Activated naive CD8-positive, alpha-beta T cell treated with anti-CD3 and anti-CD28 coated beads, Interleukin-2, amount 10 ng/mL, durations not matched to agents 7 days and 5 days (primary cell): ENCODE measurements at regions of chr5 and their contacts with region 1.

Region 1: GRCh38 chr5:134436523-134437339 is 25.1 kb upstream of the CDKN2AIPNL start:
- DNase-seq: peak; percentile 68
- ATAC-seq: peak; percentile 92
- H3K4me3 Mint-ChIP-seq: peak overlapping the region; percentile 60
- H3K27ac Mint-ChIP-seq: peak overlapping the region; percentile 81
- H3K4me1 Mint-ChIP-seq: peaks cover 22% of the 10 kb centered on the region
- H3K27me3 Mint-ChIP-seq: peaks cover 5% of the 10 kb centered on the region

Region 2: DNA sequence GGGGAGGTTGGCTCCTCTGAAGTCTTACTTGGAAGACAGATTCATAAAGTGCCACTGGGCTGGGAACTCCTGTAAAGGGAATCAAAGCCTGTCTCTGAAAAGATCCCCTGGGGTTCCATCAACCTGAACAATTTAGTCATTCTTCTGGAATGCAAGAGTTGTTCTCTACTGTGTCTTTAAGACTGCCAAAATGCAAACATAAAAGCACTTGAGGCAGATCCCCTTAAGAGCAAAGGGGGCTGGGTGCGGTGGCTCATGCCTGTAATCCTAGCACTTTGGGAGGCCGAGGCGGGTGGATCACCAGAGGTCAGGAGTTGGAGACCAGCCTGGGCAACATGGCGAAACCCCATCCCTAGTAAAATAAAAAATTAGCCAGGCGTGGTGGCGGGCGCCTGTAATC is 41.8 kb before region 1 on chr5:
- POLR2A ChIA-PET with region 1: no interaction called
- DNase-seq: no peak
- ATAC-seq: no peak
- H3K4me3 Mint-ChIP-seq: no peak overlapping the region
- H3K27ac Mint-ChIP-seq: no peak overlapping the region
- H3K4me1 Mint-ChIP-seq: no peaks in the 10 kb centered on the region
- H3K27me3 Mint-ChIP-seq: no peaks in the 10 kb centered on the region

Region 3: GRCh38 chr5:134420343-134420742 is 16.4 kb before region 1 on chr5:
- POLR2A ChIA-PET with region 1: no interaction called
- DNase-seq: no peak
- ATAC-seq: no peak
- H3K4me3 Mint-ChIP-seq: no peak overlapping the region
- H3K27ac Mint-ChIP-seq: no peak overlapping the region
- H3K4me1 Mint-ChIP-seq: no peaks in the 10 kb centered on the region
- H3K27me3 Mint-ChIP-seq: no peaks in the 10 kb centered on the region

Region 4: GRCh38 chr5:134465816-134466240 is 29.1 kb after region 1 on chr5:
- POLR2A ChIA-PET with region 1: interaction called, 11 read pairs
- DNase-seq: peak; percentile 80
- ATAC-seq: peak; percentile 77
- H3K4me3 Mint-ChIP-seq: peak overlapping the region; percentile 82
- H3K27ac Mint-ChIP-seq: peak overlapping the region; percentile 83
- H3K4me1 Mint-ChIP-seq: peaks cover 10% of the 10 kb centered on the region
- H3K27me3 Mint-ChIP-seq: peaks cover 1% of the 10 kb centered on the region

Region 5: GRCh38 chr5:134493461-134494055 is 56.8 kb after region 1 on chr5:
- POLR2A ChIA-PET with region 1: no interaction called
- DNase-seq: no peak
- ATAC-seq: no peak
- H3K4me3 Mint-ChIP-seq: no peak overlapping the region
- H3K27ac Mint-ChIP-seq: no peak overlapping the region
- H3K4me1 Mint-ChIP-seq: peaks cover 2% of the 10 kb centered on the region
- H3K27me3 Mint-ChIP-seq: no peaks in the 10 kb centered on the region

Region 6: GRCh38 chr5:134614450-134615085 is 177.8 kb after region 1 on chr5:
- POLR2A ChIA-PET with region 1: no interaction called
- DNase-seq: no peak
- ATAC-seq: no peak
- H3K4me3 Mint-ChIP-seq: no peak overlapping the region
- H3K27ac Mint-ChIP-seq: no peak overlapping the region
- H3K4me1 Mint-ChIP-seq: no peaks in the 10 kb centered on the region
- H3K27me3 Mint-ChIP-seq: no peaks in the 10 kb centered on the region